PC-3 (cell line): ENCODE measurements at regions of chr12 and their contacts with region 1.

Region 1: DNA sequence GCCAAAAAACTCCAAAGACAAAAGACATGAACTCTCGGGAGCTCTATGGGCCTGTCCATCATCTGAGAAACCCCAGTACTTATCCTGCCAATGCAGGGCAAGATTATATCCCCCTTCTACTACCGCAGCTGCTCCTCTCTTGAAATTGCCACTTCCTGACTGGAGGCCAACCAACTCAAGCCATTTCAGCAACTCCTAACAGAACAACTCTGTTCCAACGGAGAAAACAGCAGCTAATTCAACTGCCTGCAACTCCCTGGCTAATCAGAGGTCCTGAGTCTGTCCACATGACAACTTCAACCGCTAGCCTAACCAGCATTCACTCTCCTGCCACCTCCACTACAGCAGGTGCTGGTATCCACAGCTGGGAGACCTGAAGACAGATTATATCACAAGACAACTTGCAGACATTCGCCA is 24.1 kb downstream of the CEP83 start:
- DNase-seq: no peak
- ATAC-seq: no peak
- H3K4me3 ChIP-seq: no peak overlapping the region
- H3K27ac ChIP-seq: no peak overlapping the region
- H3K4me1 ChIP-seq: no peaks in the 10 kb centered on the region
- H3K27me3 ChIP-seq: no peaks in the 10 kb centered on the region
- CTCF ChIP-seq: no peak

Region 2: GRCh38 chr12:93645702-93646101 is 789.8 kb before region 1 on chr12:
- CTCF ChIA-PET with region 1: no interaction called
- POLR2A ChIA-PET with region 1: no interaction called
- intact Hi-C with region 1: no loop called
- DNase-seq: peak; percentile 58
- ATAC-seq: peak; percentile 79
- H3K4me3 ChIP-seq: no peak overlapping the region
- H3K27ac ChIP-seq: no peak overlapping the region
- H3K4me1 ChIP-seq: no peaks in the 10 kb centered on the region
- H3K27me3 ChIP-seq: no peaks in the 10 kb centered on the region
- CTCF ChIP-seq: no peak

Region 3: GRCh38 chr12:93677195-93678064 is 758.1 kb before region 1 on chr12 and contains the start of gene CRADD:
- CTCF ChIA-PET with region 1: no interaction called
- POLR2A ChIA-PET with region 1: no interaction called
- intact Hi-C with region 1: no loop called
- DNase-seq: peak; percentile 95
- ATAC-seq: peak; percentile 90
- H3K4me3 ChIP-seq: peak within 1 kb of the TSS; percentile 88
- H3K27ac ChIP-seq: peak within 1 kb of the TSS; percentile 94
- H3K4me1 ChIP-seq: peaks cover 15% of the 10 kb centered on the region
- H3K27me3 ChIP-seq: no peaks in the 10 kb centered on the region
- CTCF ChIP-seq: no peak
- total RNA-seq, gene CRADD: 11.4 and 12.5 TPM in 2 replicates

Region 4: DNA sequence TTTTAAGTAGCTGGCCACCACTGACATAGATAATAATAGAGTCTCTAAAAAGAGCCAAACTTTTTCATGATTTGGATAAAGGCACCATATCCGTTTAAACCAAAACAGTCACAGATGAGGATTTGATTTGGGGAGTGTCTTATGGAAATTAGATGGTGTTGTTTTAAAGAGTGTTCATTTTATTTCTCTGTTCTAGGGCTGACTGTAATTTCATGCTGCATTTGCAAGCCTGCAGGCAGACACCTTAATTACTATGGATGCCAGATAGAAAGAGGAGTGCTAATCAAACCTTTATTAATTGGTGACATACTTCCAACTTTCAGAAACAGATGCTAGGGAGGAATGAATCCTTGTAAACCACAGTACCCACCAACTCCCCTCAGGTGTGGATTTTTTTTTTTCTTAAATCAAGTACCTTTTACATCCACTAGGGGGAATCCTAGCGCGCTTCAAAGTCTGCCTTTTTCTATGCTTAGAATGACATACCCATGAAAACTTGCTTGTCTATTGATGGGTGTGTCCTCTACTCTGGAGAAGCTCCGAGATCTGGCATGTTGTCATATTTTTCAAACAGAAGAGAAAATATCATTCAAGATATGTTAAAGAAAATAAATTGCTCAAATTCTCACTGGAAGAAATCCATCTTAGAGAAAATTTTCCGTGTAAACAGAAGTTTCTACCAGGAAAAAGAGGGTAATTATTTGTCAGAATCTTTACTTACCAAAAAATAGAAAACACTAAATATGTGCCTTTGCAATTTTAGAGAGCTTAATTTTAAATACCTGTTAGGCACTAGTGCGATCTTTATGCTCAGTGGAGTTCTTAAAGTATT is 301.3 kb before region 1 on chr12:
- CTCF ChIA-PET with region 1: no interaction called
- POLR2A ChIA-PET with region 1: no interaction called
- intact Hi-C with region 1: loop called (anchors 1 kb)
- DNase-seq: peak; percentile 79
- ATAC-seq: peak; percentile 65
- H3K4me3 ChIP-seq: peak overlapping the region; percentile 26; the same call in 1 of the 2 replicates
- H3K27ac ChIP-seq: no peak overlapping the region
- H3K4me1 ChIP-seq: no peaks in the 10 kb centered on the region
- H3K27me3 ChIP-seq: peaks cover 4% of the 10 kb centered on the region
- CTCF ChIP-seq: peak; percentile 82

Region 5: GRCh38 chr12:94145191-94145983 is 290.1 kb before region 1 on chr12:
- CTCF ChIA-PET with region 1: no interaction called
- POLR2A ChIA-PET with region 1: no interaction called
- intact Hi-C with region 1: loop called (anchors 2 kb)
- DNase-seq: peak; percentile 61
- ATAC-seq: peak; percentile 42
- H3K4me3 ChIP-seq: no peak overlapping the region
- H3K27ac ChIP-seq: no peak overlapping the region
- H3K4me1 ChIP-seq: no peaks in the 10 kb centered on the region
- H3K27me3 ChIP-seq: peaks cover 66% of the 10 kb centered on the region
- CTCF ChIP-seq: peak; percentile 69

Region 6: DNA sequence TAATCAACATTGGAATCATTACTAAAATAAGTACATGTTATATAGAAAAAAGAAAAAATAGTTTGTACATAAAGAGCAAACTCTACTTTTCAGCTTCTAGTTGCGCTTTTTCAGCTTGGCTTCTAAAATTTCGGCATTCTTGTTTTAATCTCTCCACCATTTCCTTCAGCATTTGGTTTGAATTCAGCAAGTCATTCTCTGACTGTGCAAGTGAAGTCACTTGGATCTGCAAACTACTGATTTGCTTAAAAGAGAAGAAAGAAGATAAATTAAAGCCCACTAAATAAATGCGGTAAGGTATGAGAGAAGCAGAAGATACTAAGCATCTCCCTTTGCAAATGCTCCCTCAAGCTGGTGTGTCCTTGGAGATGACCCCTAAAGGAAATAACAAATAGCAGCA is 102.1 kb before region 1 on chr12:
- CTCF ChIA-PET with region 1: no interaction called
- POLR2A ChIA-PET with region 1: no interaction called
- intact Hi-C with region 1: loop called (anchors 5 kb)
- DNase-seq: no peak
- ATAC-seq: no peak
- H3K4me3 ChIP-seq: no peak overlapping the region
- H3K27ac ChIP-seq: no peak overlapping the region
- H3K4me1 ChIP-seq: no peaks in the 10 kb centered on the region
- H3K27me3 ChIP-seq: no peaks in the 10 kb centered on the region
- CTCF ChIP-seq: no peak